ENCODE measurements at regions of chr3 and their contacts with region 1.

Region 1: GRCh38 chr3:17349093-17349492 is 393.3 kb downstream of the TBC1D5 start:
- DNase-seq: no peak
- ATAC-seq: no peak
- H3K4me3 Mint-ChIP-seq: no peak overlapping the region
- H3K27ac Mint-ChIP-seq: no peak overlapping the region
- H3K4me1 Mint-ChIP-seq: no peaks in the 10 kb centered on the region
- H3K27me3 Mint-ChIP-seq: no peaks in the 10 kb centered on the region
- CTCF ChIP-seq: no peak

Region 2: DNA sequence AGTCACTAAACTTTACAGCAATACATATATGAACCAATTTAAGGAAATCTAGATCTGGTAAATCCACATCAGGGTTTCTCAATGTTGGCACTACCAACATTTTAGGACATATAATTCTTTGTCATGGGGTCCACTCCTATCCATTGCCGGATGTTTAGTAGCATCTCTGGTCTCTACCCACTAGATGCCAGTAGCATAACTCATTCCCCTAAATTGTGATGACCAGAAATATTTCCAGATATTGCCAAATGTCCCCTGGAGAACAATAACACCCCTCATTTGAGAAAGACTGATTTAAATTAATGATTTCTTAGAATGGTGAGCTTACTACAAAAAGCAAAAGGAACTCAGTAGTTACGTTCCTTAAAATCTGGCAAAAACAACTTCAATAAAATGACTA is 1528.2 kb before region 1 on chr3:
- CTCF ChIA-PET with region 1: no interaction called
- POLR2A ChIA-PET with region 1: no interaction called
- intact Hi-C with region 1: no loop called
- DNase-seq: no peak
- ATAC-seq: no peak
- H3K4me3 Mint-ChIP-seq: no peak overlapping the region
- H3K27ac Mint-ChIP-seq: no peak overlapping the region
- H3K4me1 Mint-ChIP-seq: peaks cover 40% of the 10 kb centered on the region
- H3K27me3 Mint-ChIP-seq: no peaks in the 10 kb centered on the region
- CTCF ChIP-seq: no peak

Region 3: GRCh38 chr3:17360991-17361390 is 11.9 kb after region 1 on chr3:
- CTCF ChIA-PET with region 1: no interaction called
- POLR2A ChIA-PET with region 1: interaction called, 3 read pairs
- intact Hi-C with region 1: loop called (anchors 2 kb)
- DNase-seq: no peak
- ATAC-seq: no peak
- H3K4me3 Mint-ChIP-seq: no peak overlapping the region
- H3K27ac Mint-ChIP-seq: no peak overlapping the region
- H3K4me1 Mint-ChIP-seq: no peaks in the 10 kb centered on the region
- H3K27me3 Mint-ChIP-seq: no peaks in the 10 kb centered on the region
- CTCF ChIP-seq: no peak